ENCODE measurements at regions of chr5 and their contacts with region 1.

Region 1: DNA sequence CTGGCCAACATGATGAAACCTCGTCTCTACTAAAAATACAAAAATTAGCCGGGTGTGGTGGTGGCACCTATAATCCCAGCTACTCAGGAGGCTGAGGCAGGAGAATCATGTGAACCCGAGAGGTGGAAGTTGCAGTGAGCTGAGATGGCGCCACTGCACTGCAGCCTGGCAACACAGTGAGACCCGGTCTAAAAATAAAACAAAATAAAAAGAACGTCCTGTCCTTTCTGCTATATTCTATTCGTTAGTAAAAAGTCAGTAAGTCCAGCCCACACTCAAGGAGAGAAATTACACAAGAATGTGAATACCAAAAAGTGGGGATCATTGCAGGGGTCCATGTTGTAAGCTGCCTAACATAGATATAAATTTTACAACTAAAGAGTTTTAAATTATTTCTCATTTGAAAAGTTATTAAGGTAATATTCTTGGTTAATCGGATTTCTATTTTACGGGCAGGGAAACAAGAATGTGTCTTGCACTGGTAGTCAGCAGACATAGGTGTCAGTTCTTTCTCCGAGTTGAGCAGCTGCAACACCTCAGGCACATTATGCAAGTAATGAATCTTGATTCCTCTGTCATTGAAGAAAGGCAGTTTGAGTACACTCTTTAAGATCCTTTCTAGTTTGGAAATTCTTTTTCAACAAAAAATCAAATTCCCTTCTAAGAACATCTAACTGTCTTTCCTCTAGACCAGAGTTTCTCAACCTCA is 24.5 kb downstream of the NMUR2 start:
- DNase-seq: no peak
- H3K4me3 ChIP-seq: no peak overlapping the region
- H3K27ac ChIP-seq: no peak overlapping the region
- H3K4me1 ChIP-seq: no peaks in the 10 kb centered on the region
- H3K27me3 ChIP-seq: no peaks in the 10 kb centered on the region
- CTCF ChIP-seq: no peak
- POLR2A ChIP-seq: no peak

Region 2: DNA sequence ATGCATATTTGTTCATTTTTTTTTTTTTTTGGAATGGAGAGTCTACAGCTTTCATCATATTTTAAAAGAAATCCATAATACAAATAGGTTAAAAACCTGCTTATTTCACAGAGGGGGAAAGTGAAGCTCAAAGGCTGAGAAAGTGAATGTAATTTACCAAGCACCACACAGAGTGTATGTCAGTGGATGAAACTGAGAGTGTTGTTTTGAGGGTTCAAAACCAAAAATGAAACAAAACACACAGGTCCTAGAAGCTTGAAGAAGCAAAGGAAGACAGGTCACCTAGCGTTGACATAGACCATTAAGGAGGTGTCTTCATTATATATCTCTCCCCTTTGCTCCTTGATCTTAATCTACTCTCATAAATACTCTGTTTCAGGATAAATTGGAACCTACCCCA is 17.0 kb after region 1 on chr5:
- intact Hi-C with region 1: loop called (anchors 1 kb)
- DNase-seq: no peak
- H3K4me3 ChIP-seq: no peak overlapping the region
- H3K27ac ChIP-seq: no peak overlapping the region
- H3K4me1 ChIP-seq: no peaks in the 10 kb centered on the region
- H3K27me3 ChIP-seq: no peaks in the 10 kb centered on the region
- CTCF ChIP-seq: no peak
- POLR2A ChIP-seq: no peak